ENCODE measurements at regions of chr12 and their contacts with region 1.

Region 1: DNA sequence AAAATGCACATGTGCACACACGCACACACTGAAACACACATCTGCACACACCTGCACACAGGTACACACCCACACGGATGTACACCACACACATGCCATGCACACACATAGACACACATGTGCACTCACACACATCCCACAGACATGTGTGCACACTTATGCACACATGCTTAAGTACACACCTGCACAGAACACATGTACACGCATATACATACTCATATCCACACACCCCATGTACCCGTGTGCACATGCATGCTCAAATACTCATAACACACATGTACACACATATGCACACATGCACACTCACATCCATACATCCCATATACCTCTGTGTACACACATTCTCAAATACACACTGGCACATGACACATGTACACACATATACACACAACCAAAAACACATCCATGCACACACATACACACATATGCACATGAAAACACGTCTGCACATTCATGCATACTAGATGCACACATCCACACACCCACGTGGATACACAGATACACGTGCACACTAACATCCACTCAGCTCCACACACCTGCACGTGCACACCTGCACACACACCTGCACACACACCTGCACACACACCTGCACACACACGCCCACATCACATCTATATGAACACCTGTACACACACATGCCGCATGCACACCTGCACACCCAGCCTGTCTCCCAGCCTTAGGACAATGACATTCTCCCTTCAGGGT is 336.7 kb downstream of the ADGRD1 start:
- DNase-seq: peak; percentile 10

Region 2: GRCh38 chr12:131673888-131674257 is 383.5 kb after region 1 on chr12:
- intact Hi-C with region 1: loop called in 1 of 2 experiments (anchors 5 kb)
- DNase-seq: no peak

Region 3: GRCh38 chr12:132018193-132018916 is 727.9 kb after region 1 on chr12:
- intact Hi-C with region 1: no loop called
- DNase-seq: peak; percentile 38

Measured in posterior vena cava (tissue), 2 donors.